H1 (cell line): ENCODE measurements at regions of chr1 and their contacts with region 1.

Region 1: GRCh38 chr1:93304716-93305138 is 41.0 kb upstream of the DR1 start:
- DNase-seq: no peak
- H3K4me3 ChIP-seq: no peak overlapping the region
- H3K27ac ChIP-seq: no peak overlapping the region
- H3K4me1 ChIP-seq: peaks cover 0 to 2% (median 0%) of the 10 kb centered on the region in 4 experiments; a peak in 1 of 7 replicates
- H3K27me3 ChIP-seq: no peaks in the 10 kb centered on the region
- CTCF ChIP-seq: peak in 2 of 3 experiments; percentile 61 to 87; a peak in 2 of 4 replicates
- EP300 ChIP-seq: no peak
- POLR2A ChIP-seq: no peak
- RAD21 ChIP-seq: peak; percentile 91

Region 2: DNA sequence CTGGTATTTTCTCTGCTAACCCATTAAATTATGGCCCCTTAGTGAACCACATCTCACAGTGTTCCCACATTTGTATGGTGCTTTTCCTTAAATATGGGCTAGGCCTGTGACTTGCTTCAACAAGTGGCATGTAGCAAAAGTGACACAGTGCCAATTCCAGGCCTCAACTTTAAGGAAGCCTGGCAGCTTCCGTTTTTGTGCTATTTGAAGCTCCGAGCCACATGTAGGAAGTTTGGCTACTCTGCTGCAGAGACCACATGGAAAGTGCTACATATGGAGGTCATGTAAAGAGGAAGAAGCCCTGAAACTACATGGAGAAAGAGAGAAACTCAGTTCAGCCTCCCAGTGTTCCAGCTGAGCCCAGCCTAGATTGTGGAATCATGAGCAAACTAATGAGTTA is 12.5 kb after region 1 on chr1:
- CTCF ChIA-PET with region 1: interaction called, 34 read pairs
- POLR2A ChIA-PET with region 1: no interaction called
- DNase-seq: no peak
- H3K4me3 ChIP-seq: no peak overlapping the region
- H3K27ac ChIP-seq: no peak overlapping the region
- H3K4me1 ChIP-seq: no peaks in the 10 kb centered on the region
- H3K27me3 ChIP-seq: no peaks in the 10 kb centered on the region
- CTCF ChIP-seq: no peak
- EP300 ChIP-seq: no peak
- POLR2A ChIP-seq: no peak
- RAD21 ChIP-seq: no peak

Region 3: GRCh38 chr1:93328809-93329760 is 24.4 kb after region 1 on chr1:
- CTCF ChIA-PET with region 1: interaction called, 11 read pairs
- POLR2A ChIA-PET with region 1: interaction called, 3 read pairs
- DNase-seq: no peak
- H3K4me3 ChIP-seq: no peak overlapping the region
- H3K27ac ChIP-seq: no peak overlapping the region
- H3K4me1 ChIP-seq: peaks cover 0 to 6% (median 0%) of the 10 kb centered on the region in 4 experiments; a peak in 1 of 7 replicates
- H3K27me3 ChIP-seq: no peaks in the 10 kb centered on the region
- CTCF ChIP-seq: no peak
- EP300 ChIP-seq: no peak
- POLR2A ChIP-seq: no peak
- RAD21 ChIP-seq: no peak

Region 4: GRCh38 chr1:93338421-93338820 is 33.7 kb after region 1 on chr1:
- CTCF ChIA-PET with region 1: interaction called, 12 read pairs
- POLR2A ChIA-PET with region 1: interaction called, 3 read pairs
- DNase-seq: no peak
- H3K4me3 ChIP-seq: no peak overlapping the region
- H3K27ac ChIP-seq: no peak overlapping the region
- H3K4me1 ChIP-seq: no peaks in the 10 kb centered on the region; a peak in 1 of 7 replicates
- H3K27me3 ChIP-seq: no peaks in the 10 kb centered on the region
- CTCF ChIP-seq: no peak
- EP300 ChIP-seq: no peak
- POLR2A ChIP-seq: no peak
- RAD21 ChIP-seq: no peak